Mammary epithelial cell (primary cell): ENCODE measurements at regions of chr7 and their contacts with region 1.

Region 1: DNA sequence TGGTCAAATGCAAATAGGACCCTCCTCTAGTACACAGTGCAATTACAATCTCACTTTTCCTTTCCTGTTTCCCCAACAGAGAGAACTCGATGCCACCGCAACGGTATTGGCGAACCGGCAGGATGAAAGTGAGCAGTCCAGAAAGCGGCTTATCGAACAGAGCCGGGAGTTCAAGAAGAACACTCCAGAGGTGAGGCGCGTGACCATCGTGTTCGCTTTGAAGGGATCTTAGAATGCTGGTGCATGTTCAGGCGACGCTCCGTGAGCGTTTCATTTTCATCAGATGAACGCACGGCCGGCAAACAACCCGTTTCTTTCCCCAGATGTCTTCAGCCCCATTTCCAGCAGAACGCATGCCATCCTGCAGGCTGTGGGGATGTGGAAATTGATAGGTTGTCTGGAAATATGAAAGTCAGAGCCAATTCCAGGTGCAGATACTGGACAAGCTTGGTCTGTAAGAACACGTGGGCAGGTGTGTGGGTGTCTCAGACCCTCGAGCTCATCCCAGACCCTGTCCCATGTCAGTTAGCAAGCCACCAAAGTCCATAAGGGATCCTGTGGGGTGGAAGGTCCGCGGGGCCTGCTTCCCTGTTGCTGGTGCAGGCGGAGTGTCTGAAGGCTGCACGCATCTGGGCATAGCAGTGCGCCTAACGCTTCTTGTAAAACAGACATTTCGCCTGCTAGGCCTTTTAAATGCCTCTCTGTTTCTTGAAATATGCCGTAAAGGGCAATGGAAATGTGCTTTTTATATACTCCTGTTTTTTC is 98.8 kb downstream of the CUX1 start:
- DNase-seq: no peak
- H3K4me3 ChIP-seq: no peak overlapping the region
- H3K27ac ChIP-seq: no peak overlapping the region
- H3K4me1 ChIP-seq: no peaks in the 10 kb centered on the region
- H3K27me3 ChIP-seq: no peaks in the 10 kb centered on the region
- CTCF ChIP-seq: no peak

Region 2: GRCh38 chr7:101602484-101603241 is 313.6 kb before region 1 on chr7:
- CTCF ChIA-PET with region 1: no interaction called
- dilution Hi-C with region 1: no loop called
- in situ Hi-C with region 1: no loop called
- intact Hi-C with region 1: no loop called
- DNase-seq: peak; percentile 55
- H3K4me3 ChIP-seq: no peak overlapping the region
- H3K27ac ChIP-seq: no peak overlapping the region
- H3K4me1 ChIP-seq: peaks cover 12% of the 10 kb centered on the region
- H3K27me3 ChIP-seq: no peaks in the 10 kb centered on the region
- CTCF ChIP-seq: peak; percentile 65 to 97

Region 3: GRCh38 chr7:101815835-101816493 is 100.3 kb before region 1 on chr7:
- CTCF ChIA-PET with region 1: no interaction called
- dilution Hi-C with region 1: no loop called
- in situ Hi-C with region 1: no loop called
- intact Hi-C with region 1: no loop called
- DNase-seq: peak; percentile 75
- H3K4me3 ChIP-seq: peak overlapping the region; percentile 48 to 70 (median 68)
- H3K27ac ChIP-seq: peak overlapping the region; percentile 48
- H3K4me1 ChIP-seq: peaks cover 16% of the 10 kb centered on the region
- H3K27me3 ChIP-seq: no peaks in the 10 kb centered on the region
- CTCF ChIP-seq: peak in 1 of 2 donors; percentile 32

Region 4: DNA sequence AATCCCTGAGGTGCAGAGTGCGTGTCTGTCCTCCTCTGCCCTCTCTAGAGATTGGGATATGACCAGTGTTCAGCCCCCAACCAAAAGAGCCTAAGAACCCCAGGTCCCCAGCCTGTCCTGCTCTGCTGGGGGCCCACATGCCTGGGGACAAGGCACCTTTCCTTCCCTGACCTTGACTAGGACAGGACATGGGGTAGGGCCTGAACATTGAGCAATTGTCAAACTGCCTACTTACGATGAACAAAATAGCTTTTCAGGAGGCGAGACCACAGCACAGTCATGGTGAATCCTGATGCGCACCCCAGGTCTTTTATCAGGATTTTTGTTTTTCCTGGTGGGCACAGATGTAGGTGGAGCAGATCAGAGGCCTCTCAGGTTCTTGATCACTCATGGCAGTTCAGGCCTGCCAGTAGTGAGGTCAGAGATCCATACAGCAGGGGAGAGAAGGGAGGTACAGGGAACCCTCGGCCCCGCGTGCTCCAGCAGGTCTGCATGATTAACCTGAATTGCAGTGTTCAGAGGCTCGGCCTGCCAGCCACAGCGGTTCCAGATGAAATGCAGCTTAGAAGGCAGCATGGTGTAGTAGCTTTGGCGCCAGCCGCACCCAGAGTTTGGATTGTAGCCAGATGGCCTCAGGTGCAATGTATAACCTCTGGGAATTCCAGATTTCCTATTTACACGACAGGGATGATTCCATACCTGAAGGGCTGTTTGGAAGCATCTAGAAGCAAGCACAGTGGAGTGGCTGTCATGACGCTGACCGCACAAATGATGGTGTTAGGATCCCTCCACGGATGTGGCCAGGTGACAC is 92.5 kb after region 1 on chr7:
- CTCF ChIA-PET with region 1: no interaction called
- dilution Hi-C with region 1: loop called (anchors 5 kb)
- in situ Hi-C with region 1: no loop called
- intact Hi-C with region 1: no loop called
- DNase-seq: peak; percentile 70
- H3K4me3 ChIP-seq: no peak overlapping the region
- H3K27ac ChIP-seq: no peak overlapping the region
- H3K4me1 ChIP-seq: peaks cover 7% of the 10 kb centered on the region
- H3K27me3 ChIP-seq: no peaks in the 10 kb centered on the region
- CTCF ChIP-seq: no peak